Left cardiac atrium (tissue), 4 donors: ENCODE measurements at regions of chr4 and their contacts with region 1.

Region 1: DNA sequence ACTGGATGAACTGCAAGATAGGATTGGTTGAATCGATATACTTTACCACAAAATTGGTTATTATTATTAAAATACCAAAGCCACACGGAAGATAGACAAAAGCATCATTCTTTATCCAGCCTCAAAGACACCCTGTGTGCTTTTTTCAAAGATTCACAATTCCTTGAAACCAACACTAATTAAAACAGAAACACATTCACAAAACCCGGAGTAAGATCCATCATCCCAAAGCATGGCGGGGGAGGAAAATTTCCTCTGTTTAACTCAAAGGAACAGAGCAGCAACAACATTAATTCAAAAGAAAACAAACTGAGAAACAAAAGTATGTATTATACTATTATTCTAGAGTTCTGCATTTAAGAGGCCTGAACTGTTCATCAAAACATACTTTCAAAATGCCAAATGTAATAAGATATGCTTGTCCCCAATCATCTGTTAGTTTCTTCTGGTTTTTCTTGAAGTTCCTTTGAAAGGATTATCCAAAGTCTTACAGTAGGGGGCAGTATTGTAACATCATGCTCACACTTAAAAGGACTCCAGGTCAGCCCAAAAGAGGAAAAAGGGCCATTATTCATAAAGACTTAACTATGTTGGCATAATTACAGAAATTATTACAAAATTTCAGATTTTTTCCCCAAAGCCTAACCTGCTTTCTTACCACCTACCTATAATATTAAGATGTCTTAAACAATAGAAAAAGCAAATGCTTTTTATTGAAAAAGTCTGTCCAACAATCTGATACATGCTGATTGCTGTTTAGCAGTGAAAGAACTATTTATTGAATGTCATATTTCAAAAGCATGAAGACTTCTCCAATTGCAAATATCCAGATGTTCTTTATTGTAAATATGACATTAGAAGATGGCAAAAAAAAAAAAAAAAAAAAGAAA is 168.7 kb downstream of the SCFD2 start:
- DNase-seq: no peak
- ATAC-seq: peak; percentile 65 to 70

Region 2: GRCh38 chr4:53365486-53366300 is 168.6 kb after region 1 on chr4 and contains the start of gene SCFD2:
- intact Hi-C with region 1: loop called in 1 of 2 experiments (anchors 10 kb)
- DNase-seq: peak; percentile 98
- ATAC-seq: peak; percentile 100
- total RNA-seq, gene SCFD2: 9.3 to 13.8 TPM

Region 3: GRCh38 chr4:53459548-53459947 is 262.4 kb after region 1 on chr4:
- intact Hi-C with region 1: no loop called
- DNase-seq: no peak
- ATAC-seq: peak in 1 of 2 donors; percentile 25

Region 4: GRCh38 chr4:53908661-53909078 is 711.5 kb after region 1 on chr4:
- intact Hi-C with region 1: loop called in 1 of 2 experiments (anchors 10 kb)
- DNase-seq: no peak
- ATAC-seq: peak; percentile 87 to 92

Region 5: GRCh38 chr4:54233277-54233696 is 1036.2 kb after region 1 on chr4:
- intact Hi-C with region 1: loop called (anchors 5 kb)
- DNase-seq: peak; percentile 89
- ATAC-seq: peak; percentile 85 to 88